ENCODE measurements at regions of chr19 and their contacts with region 1.

Region 1: DNA sequence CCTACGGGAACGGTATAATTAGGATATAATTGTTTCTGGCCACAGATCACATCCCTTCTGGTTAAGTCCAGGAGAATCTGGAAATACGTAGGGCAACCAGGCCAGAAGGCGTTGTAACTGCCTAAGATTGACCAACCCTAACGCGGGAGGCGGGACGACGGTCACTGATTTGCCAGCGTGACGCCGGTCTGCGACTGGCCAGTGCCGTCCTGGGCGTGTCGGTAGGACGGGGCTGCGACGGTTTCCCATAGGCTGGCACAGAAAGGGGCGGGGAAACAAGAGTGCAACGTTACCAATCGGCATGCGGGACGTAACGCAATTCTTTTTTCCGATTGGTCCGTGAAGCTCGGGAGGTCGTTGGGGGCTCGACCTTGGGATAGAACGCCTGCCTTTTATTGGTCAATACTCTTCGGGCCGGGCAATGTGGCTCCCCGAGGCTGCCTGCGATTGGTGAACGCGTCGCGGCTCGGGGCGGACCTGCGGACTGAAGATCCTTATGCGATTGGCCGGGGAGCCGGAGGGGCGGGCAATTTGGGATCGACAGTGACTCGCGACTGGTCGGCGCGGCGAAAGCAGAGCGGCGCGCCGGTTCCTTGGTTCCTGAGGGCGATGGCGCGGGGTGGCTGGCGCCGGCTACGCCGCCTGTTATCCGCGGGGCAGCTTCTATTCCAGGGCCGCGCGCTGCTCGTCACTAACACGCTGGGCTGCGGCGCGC is at the start of gene MPV17L2:
- DNase-seq: peak; percentile 100
- ATAC-seq: peak; percentile 97
- H3K4me3 ChIP-seq: peak within 1 kb of the TSS; percentile 37 to 59
- H3K27ac ChIP-seq: peak within 1 kb of the TSS; percentile 46 to 94
- H3K4me1 ChIP-seq: no peaks in the 10 kb centered on the region
- H3K27me3 ChIP-seq: no peaks in the 10 kb centered on the region
- total RNA-seq, gene MPV17L2: 5.7 to 6.2 TPM

Region 2: GRCh38 chr19:18203863-18204393 is 11.1 kb after region 1 on chr19 and contains the start of gene RAB3A:
- intact Hi-C with region 1: loop called in 1 of 2 experiments (anchors 1 kb)
- DNase-seq: peak; percentile 100
- ATAC-seq: peak; percentile 98
- H3K4me3 ChIP-seq: peak within 1 kb of the TSS; percentile 41 to 66
- H3K27ac ChIP-seq: peak within 1 kb of the TSS; percentile 72 to 87
- H3K4me1 ChIP-seq: peaks cover 0 to 3% of the 10 kb centered on the region in 2 donors
- H3K27me3 ChIP-seq: no peaks in the 10 kb centered on the region
- total RNA-seq, gene RAB3A: 3.4 to 3.8 TPM

Region 3: GRCh38 chr19:18251587-18252369 is 58.9 kb after region 1 on chr19:
- intact Hi-C with region 1: loop called (anchors 5 kb)
- DNase-seq: peak; percentile 76 to 91
- ATAC-seq: peak; percentile 80
- H3K4me3 ChIP-seq: no peak overlapping the region
- H3K27ac ChIP-seq: no peak overlapping the region
- H3K4me1 ChIP-seq: no peaks in the 10 kb centered on the region
- H3K27me3 ChIP-seq: no peaks in the 10 kb centered on the region

Region 4: GRCh38 chr19:18322759-18323460 is 130.1 kb after region 1 on chr19 and contains the start of gene LSM4:
- intact Hi-C with region 1: loop called in 1 of 2 experiments (anchors 1 kb)
- DNase-seq: peak; percentile 98 to 99
- ATAC-seq: peak; percentile 98
- H3K4me3 ChIP-seq: peak within 1 kb of the TSS; percentile 14 to 44
- H3K27ac ChIP-seq: peak within 1 kb of the TSS; percentile 74 to 78
- H3K4me1 ChIP-seq: peaks cover 0 to 4% of the 10 kb centered on the region in 2 donors
- H3K27me3 ChIP-seq: no peaks in the 10 kb centered on the region
- total RNA-seq, gene LSM4: 32.2 to 34.5 TPM

Region 5: DNA sequence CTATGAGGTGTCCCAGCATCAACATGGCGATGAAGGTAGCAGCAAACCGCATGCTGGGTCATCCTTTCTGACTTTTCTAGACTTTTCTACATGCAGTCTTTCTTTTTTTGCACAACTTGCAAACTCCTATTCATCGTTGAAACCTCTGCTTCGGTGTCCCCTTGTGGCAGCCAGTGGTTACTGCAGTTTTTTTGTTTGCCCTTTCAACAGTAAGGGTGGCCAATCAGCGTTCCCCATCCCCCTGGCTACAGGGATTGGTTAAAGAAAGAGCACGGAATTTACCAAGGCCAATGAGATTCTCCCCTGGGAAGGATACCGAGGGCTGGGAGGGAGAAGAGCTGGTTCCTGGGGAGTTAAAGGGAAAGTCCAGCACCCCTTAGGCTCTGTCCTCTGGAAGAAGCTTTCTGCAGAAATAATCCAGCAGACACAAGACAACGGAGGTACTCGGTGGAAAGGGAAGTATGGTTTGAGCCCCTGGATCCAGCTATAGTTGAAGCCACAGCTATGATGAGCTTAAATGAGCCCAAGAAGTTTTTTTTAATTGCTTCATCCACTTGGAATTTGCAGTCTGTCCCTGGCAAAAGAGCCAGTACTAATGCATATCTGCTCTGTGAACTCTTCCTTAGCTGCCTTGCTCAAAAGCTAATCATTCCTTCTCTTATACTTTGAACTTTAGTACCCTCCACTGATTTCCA is 135.7 kb after region 1 on chr19:
- intact Hi-C with region 1: loop called in 1 of 2 experiments (anchors 1 kb)
- DNase-seq: peak; percentile 91 to 95
- ATAC-seq: peak; percentile 94
- H3K4me3 ChIP-seq: no peak overlapping the region
- H3K27ac ChIP-seq: peak overlapping the region in 1 of 2 donors; percentile 50
- H3K4me1 ChIP-seq: no peaks in the 10 kb centered on the region
- H3K27me3 ChIP-seq: no peaks in the 10 kb centered on the region

Measured in aorta (tissue), 5 donors.